Right ventricle myocardium inferior (tissue), 1 donor: ENCODE measurements at regions of chr17 and their contacts with region 1.

Region 1: DNA sequence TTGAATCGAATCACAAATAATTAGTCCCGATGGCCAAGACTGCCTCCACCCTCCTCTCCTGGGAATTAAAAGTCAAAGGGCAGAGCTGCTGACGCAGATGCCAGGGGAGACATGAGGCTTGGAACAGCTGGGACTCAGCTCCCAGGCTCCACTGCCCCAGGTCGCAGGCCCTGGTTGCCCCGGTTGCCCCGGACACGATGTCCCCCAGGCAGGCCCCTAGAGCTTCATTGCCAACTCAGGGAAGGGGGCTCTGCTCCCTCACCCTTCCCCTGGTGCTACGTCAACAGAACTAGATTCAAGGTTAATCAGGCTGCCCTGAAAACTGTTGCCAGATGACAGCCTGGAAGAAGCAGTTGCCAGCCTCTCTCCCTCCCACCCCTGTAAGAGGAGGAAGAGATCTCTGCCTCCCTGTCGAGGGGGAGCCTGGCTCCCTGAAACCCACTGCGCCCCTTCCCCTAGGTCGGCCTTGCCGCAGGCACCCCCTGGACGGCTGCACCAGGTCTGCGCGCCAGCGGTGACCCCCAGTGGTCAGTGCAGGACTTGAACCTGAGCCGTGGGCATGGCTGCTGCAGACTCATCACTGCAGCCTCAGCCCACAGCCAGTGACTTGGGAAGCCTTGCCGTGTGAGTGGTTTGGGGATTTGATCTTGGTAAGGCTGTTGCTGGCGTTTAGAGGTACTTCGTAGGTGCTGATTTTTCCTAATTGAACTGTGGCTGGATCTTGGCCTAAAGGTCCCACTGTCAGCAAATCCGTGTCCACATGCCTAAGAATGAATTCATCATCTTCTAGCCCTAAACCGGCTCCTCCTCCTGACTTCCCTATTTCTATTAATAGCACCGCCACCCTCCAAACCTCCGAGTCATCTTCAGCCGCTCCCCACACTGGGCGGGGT is 84.1 kb upstream of the TOB1 start:
- DNase-seq: peak; percentile 87
- ATAC-seq: peak; percentile 76

Region 2: DNA sequence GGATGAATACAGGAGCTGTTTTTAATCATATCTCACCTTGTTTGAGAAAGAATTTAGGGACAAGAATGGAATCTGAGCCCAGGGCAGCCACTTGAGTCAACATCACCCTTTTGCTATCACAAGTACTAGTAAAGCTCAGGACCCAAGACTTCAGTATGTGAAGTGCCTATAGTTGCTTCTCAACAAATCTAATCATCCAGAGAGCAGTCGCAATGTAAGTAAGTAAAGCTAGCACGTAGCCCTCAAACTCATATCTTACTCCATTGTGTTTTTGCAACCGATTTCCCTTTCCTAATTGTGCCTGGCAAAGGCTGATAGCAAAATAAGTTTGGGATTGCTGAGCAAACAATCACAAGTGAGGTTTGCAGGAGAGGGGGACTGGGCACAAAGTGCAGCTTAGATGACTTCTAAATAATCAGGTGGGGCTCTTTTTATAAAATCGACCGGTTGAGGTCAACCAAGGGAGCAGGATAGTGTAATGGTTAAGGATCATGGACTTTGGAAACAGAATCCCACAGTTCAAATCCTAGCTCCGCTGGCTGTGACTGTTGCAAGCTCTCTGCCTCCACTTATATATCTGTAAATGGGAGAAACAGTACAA is 97.1 kb before region 1 on chr17:
- intact Hi-C with region 1: loop called (anchors 2 kb)
- DNase-seq: no peak
- ATAC-seq: no peak

Region 3: DNA sequence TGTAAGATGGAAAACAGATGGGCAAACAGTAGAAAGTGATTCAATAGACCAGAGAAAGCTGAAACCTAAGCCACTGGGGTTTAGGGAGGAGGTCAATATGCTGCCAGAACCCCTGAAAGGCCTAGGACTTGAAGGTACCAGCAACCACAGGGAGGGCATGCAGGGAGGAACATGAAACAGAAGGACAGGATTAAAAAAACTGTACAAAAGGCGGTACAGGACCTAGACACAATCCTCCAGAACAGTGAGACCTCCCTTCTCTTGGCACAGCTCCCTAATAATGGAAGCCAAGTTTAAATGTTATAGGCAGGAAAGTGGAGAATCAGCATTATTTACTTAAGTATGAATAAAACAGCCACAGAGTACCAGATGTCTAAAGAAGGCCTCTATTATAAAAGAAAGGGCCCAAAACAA is 64.9 kb after region 1 on chr17:
- intact Hi-C with region 1: no loop called
- DNase-seq: no peak
- ATAC-seq: no peak